BJ (cell line): ENCODE measurements at regions of chr5 and their contacts with region 1.

Region 1: DNA sequence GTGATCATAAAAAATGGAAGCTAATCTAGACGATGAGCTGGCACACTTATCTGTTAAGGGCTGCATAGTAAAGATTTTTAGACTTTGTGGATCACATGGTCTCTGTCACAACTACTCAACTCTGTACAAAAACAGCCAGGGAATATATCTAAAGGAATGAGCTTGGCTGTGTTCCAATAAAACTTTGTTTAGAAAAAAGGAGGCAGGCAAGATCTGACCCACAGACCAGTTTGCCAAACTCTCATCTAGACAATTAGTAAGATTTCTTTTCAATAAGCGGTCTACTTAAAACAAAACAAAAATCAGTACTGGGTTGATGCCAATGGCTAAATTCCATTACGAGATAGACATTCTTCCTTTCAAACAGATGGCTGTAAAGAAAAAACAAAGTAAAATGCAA is 53.0 kb upstream of the RETREG1 start:
- DNase-seq: no peak
- H3K4me3 ChIP-seq: no peak overlapping the region
- H3K27me3 ChIP-seq: no peaks in the 10 kb centered on the region
- CTCF ChIP-seq: no peak

Region 2: GRCh38 chr5:16690243-16690852 is 20.6 kb after region 1 on chr5:
- CTCF ChIA-PET with region 1: interaction called, 20 read pairs
- POLR2A ChIA-PET with region 1: no interaction called
- DNase-seq: no peak
- H3K4me3 ChIP-seq: no peak overlapping the region
- H3K27me3 ChIP-seq: no peaks in the 10 kb centered on the region
- CTCF ChIP-seq: peak; percentile 84